Endothelial cell of umbilical vein (primary cell): ENCODE measurements at regions of chr4 and their contacts with region 1.

Region 1: GRCh38 chr4:8176547-8177399 is 18.2 kb upstream of the ABLIM2 start:
- DNase-seq: peak; percentile 45
- H3K4me3 ChIP-seq: no peak overlapping the region
- H3K27ac ChIP-seq: no peak overlapping the region
- H3K4me1 ChIP-seq: no peaks in the 10 kb centered on the region
- H3K27me3 ChIP-seq: no peaks in the 10 kb centered on the region
- CTCF ChIP-seq: peak; percentile 82 to 86
- POLR2A ChIP-seq: no peak

Region 2: GRCh38 chr4:8192748-8193738 is 16.3 kb after region 1 on chr4:
- CTCF ChIA-PET with region 1: interaction called, 196 read pairs
- POLR2A ChIA-PET with region 1: interaction called, 3 read pairs
- dilution Hi-C with region 1: no loop called
- intact Hi-C with region 1: loop called (anchors 1 kb)
- DNase-seq: peak; percentile 79
- H3K4me3 ChIP-seq: no peak overlapping the region
- H3K27ac ChIP-seq: no peak overlapping the region
- H3K4me1 ChIP-seq: peaks cover 62% of the 10 kb centered on the region
- H3K27me3 ChIP-seq: no peaks in the 10 kb centered on the region
- CTCF ChIP-seq: peak; percentile 9 to 18
- POLR2A ChIP-seq: no peak

Region 3: DNA sequence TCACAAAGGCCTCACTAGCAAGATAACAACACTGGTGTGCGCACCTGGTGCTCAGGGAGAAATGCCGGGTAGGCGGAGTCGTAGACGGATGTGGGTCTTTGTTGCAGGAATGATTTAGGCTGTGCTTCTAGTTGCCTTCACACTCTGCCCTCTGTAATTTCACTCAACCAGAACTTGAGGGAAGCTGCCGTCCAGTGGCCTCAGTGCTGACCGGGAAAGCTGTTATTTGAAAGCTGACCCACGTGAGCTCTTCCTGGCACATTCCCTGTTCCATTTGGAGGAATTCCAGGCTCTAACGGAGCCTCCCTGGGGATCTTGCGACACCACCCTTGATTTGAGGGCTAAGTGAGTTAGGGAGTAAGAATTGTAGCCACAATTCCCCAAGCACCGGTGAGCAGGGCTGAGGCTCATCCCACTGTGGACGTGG is 38.2 kb after region 1 on chr4:
- CTCF ChIA-PET with region 1: interaction called, 196 read pairs
- POLR2A ChIA-PET with region 1: interaction called, 6 read pairs
- dilution Hi-C with region 1: no loop called
- intact Hi-C with region 1: no loop called
- DNase-seq: peak; percentile 20
- H3K4me3 ChIP-seq: no peak overlapping the region
- H3K27ac ChIP-seq: no peak overlapping the region
- H3K4me1 ChIP-seq: no peaks in the 10 kb centered on the region
- H3K27me3 ChIP-seq: no peaks in the 10 kb centered on the region
- CTCF ChIP-seq: no peak
- POLR2A ChIP-seq: no peak

Region 4: DNA sequence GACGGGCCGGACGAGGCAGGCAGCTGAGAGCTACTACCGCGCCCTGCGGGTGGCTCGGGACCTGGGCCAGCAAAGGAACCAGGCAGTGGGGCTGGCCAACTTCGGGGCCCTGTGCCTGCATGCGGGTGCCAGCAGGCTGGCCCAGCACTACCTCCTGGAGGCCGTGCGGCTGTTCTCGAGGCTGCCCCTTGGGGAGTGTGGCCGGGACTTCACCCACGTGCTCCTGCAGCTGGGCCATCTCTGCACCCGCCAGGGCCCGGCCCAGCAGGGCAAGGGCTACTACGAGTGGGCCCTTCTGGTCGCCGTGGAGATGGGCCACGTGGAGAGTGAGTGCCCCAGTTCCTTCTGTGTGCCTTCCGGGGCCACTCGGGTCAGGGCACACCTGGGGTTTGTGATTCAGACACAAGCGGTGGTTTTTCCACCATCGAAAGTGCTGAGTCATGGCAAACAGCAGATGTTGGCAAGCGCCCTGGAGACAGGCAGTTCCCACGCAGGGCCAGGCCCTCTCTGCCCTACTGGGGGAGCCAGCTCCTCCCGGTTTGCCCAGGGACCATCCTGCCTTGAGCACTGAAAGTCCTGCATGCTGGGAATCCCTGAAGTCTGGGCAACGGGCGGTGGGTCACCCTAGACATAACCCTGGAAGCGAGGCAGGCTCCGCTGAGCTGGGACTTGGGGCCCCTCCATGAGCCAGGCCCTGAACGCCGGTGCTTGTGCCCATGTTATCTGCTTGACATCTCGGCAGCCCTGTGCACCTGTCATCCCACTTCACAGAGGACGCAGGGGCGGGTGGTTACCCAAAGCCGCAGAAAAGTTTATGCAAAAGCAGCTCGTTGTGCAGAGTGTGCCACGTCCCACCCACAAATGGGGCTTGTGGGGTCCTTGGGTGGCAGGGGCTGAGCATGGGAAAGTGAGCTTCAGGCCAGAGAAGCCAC is 51.8 kb after region 1 on chr4:
- CTCF ChIA-PET with region 1: interaction called, 25 read pairs
- POLR2A ChIA-PET with region 1: no interaction called
- dilution Hi-C with region 1: no loop called
- intact Hi-C with region 1: no loop called
- DNase-seq: peak; percentile 88
- H3K4me3 ChIP-seq: no peak overlapping the region
- H3K27ac ChIP-seq: peak overlapping the region; percentile 50
- H3K4me1 ChIP-seq: peaks cover 6% of the 10 kb centered on the region
- H3K27me3 ChIP-seq: no peaks in the 10 kb centered on the region
- CTCF ChIP-seq: no peak
- POLR2A ChIP-seq: no peak

Region 5: DNA sequence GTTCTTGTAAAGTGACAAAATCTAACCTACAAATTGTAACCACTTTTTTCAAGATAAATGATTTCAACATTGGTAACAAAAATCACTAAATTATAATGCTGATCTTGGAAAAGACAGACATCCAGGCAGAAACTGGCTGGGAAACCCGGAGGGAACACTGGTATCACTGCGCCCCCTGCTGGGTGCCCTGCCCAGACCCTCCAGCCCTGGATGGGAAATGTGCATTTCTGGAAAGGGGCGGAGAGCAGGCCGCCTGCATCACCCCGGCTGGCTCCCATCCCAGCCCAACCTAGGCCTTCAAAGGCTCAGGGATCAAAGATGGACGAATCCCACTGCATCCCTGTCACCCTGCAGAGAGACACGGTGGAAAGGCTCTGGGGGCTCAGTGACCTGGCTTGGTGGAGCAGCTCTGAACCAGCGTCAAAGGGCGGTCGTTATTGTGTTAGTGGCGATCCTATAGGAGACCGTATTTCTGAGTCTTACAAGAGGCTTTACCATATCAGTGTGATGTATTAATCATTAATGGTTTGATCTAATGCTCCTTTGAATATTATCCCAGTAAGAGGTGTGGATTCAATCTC is 226.5 kb after region 1 on chr4:
- CTCF ChIA-PET with region 1: interaction called, 37 read pairs
- POLR2A ChIA-PET with region 1: no interaction called
- dilution Hi-C with region 1: no loop called
- intact Hi-C with region 1: loop called (anchors 2 kb)
- DNase-seq: peak; percentile 80
- H3K4me3 ChIP-seq: no peak overlapping the region
- H3K27ac ChIP-seq: peak overlapping the region; percentile 26
- H3K4me1 ChIP-seq: peaks cover 11% of the 10 kb centered on the region
- H3K27me3 ChIP-seq: no peaks in the 10 kb centered on the region
- CTCF ChIP-seq: peak; percentile 91 to 95
- POLR2A ChIP-seq: no peak